B cell (primary cell): ENCODE measurements at regions of chr4 and their contacts with region 1.

Region 1: GRCh38 chr4:83110223-83110945 is 4.1 kb downstream of the PLAC8 start:
- DNase-seq: peak; percentile 94
- ATAC-seq: peak; percentile 75
- H3K4me3 ChIP-seq: peak overlapping the region; percentile 64 to 100 (median 75)
- H3K4me3 Mint-ChIP-seq: peak overlapping the region; percentile 97
- H3K27ac ChIP-seq: peak overlapping the region; percentile 91
- H3K27ac Mint-ChIP-seq: peak overlapping the region; percentile 99
- H3K4me1 ChIP-seq: peaks cover 44 to 48% of the 10 kb centered on the region in 2 donors
- H3K4me1 Mint-ChIP-seq: peaks cover 60% of the 10 kb centered on the region
- H3K27me3 ChIP-seq: no peaks in the 10 kb centered on the region
- H3K27me3 Mint-ChIP-seq: no peaks in the 10 kb centered on the region
- CTCF ChIP-seq: peak; percentile 75

Region 2: DNA sequence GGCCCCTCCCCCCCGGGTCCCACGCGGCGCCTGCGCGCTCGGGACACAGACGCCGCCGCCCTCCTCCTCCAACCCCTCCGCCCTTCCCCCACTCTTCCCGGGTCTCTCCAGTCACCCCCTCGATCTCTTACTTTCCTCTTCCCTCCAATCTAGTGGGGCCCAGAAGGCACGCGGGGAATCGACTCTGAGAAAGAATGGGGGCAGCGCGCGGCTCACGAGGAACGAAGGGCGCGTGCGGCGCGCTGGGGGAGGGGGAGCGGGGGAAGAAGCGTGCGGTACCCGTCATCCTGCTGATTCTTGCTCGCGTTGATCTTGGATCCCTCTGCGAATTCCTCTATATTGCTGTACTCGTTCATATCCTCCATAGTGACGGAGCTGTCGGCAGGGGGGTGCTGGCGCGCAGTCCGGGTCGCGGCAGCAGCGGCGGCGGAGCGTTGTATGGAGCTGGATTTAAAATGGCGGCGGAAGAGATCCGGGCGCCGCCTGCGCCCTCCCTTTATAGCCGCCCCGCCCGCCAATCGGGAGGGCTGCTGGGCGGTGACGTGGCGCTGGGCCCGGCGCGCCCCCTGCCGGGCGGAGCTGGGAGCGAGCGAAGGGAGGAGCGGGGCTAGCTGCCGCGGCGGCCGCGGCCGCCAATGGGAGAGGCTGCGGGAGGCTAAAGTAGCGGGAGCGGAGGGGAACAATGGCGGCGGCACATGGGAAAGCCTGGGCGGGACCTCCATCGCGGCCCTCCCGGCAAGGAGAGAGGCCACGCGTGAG is 681.2 kb before region 1 on chr4:
- CTCF ChIA-PET with region 1: no interaction called
- POLR2A ChIA-PET with region 1: no interaction called
- intact Hi-C with region 1: loop called (anchors 2 kb)
- DNase-seq: peak; percentile 97
- ATAC-seq: peak; percentile 64
- H3K4me3 ChIP-seq: peak overlapping the region; percentile 98 to 99 (median 98)
- H3K4me3 Mint-ChIP-seq: peak overlapping the region; percentile 100
- H3K27ac ChIP-seq: peak overlapping the region; percentile 96 to 100
- H3K27ac Mint-ChIP-seq: peak overlapping the region; percentile 100
- H3K4me1 ChIP-seq: peaks cover 27 to 32% of the 10 kb centered on the region in 2 donors
- H3K4me1 Mint-ChIP-seq: peaks cover 48% of the 10 kb centered on the region
- H3K27me3 ChIP-seq: no peaks in the 10 kb centered on the region
- H3K27me3 Mint-ChIP-seq: no peaks in the 10 kb centered on the region
- CTCF ChIP-seq: peak; percentile 97

Region 3: GRCh38 chr4:83034630-83035494 is 75.5 kb before region 1 on chr4 and contains the start of gene COPS4:
- CTCF ChIA-PET with region 1: interaction called, 4 read pairs
- POLR2A ChIA-PET with region 1: interaction called, 4 read pairs
- intact Hi-C with region 1: loop called (anchors 1 kb)
- DNase-seq: peak; percentile 99
- ATAC-seq: peak; percentile 95
- H3K4me3 ChIP-seq: peak within 1 kb of the TSS; percentile 80 to 94 (median 91)
- H3K4me3 Mint-ChIP-seq: peak within 1 kb of the TSS; percentile 98
- H3K27ac ChIP-seq: peak within 1 kb of the TSS; percentile 84 to 86
- H3K27ac Mint-ChIP-seq: peak within 1 kb of the TSS; percentile 98
- H3K4me1 ChIP-seq: peaks cover 10 to 16% of the 10 kb centered on the region in 2 donors
- H3K4me1 Mint-ChIP-seq: peaks cover 34% of the 10 kb centered on the region
- H3K27me3 ChIP-seq: no peaks in the 10 kb centered on the region
- H3K27me3 Mint-ChIP-seq: no peaks in the 10 kb centered on the region
- CTCF ChIP-seq: peak; percentile 34
- total RNA-seq, gene COPS4: 24.5 and 32.8 TPM in 2 replicates

Region 4: DNA sequence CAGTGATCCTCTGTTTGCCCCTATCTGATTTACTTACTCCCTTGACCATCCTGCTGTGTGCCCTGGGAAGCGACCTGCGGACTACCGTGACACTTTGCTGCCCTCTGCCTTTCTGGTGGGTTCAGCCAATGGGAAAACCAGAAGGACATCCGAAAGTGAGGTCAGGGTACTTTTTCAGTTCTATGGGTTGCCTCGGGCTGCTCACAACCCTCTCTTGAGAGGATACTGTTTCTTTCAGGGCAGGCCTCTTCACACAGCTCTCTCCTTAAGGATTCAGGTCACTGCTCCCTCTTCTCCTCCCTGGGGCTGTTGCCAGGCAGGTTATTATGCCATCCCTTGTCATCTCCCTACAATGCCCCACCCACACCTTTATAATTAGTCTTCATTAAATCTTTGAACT is 17.3 kb before region 1 on chr4:
- CTCF ChIA-PET with region 1: interaction called, 10 read pairs
- POLR2A ChIA-PET with region 1: interaction called, 16 read pairs
- intact Hi-C with region 1: no loop called
- DNase-seq: no peak
- ATAC-seq: no peak
- H3K4me3 ChIP-seq: no peak overlapping the region
- H3K4me3 Mint-ChIP-seq: no peak overlapping the region
- H3K27ac ChIP-seq: peak overlapping the region in 1 of 2 donors; percentile 58
- H3K27ac Mint-ChIP-seq: peak overlapping the region; percentile 80
- H3K4me1 ChIP-seq: peaks cover 0 to 5% of the 10 kb centered on the region in 2 donors
- H3K4me1 Mint-ChIP-seq: peaks cover 29% of the 10 kb centered on the region
- H3K27me3 ChIP-seq: no peaks in the 10 kb centered on the region
- H3K27me3 Mint-ChIP-seq: no peaks in the 10 kb centered on the region
- CTCF ChIP-seq: no peak

Region 5: GRCh38 chr4:83150653-83151330 is 40.4 kb after region 1 on chr4:
- CTCF ChIA-PET with region 1: interaction called, 20 read pairs
- POLR2A ChIA-PET with region 1: interaction called, 5 read pairs
- intact Hi-C with region 1: loop called (anchors 2 kb)
- DNase-seq: no peak
- ATAC-seq: no peak
- H3K4me3 ChIP-seq: no peak overlapping the region
- H3K4me3 Mint-ChIP-seq: no peak overlapping the region
- H3K27ac ChIP-seq: no peak overlapping the region
- H3K27ac Mint-ChIP-seq: no peak overlapping the region
- H3K4me1 ChIP-seq: peaks cover 31 to 33% of the 10 kb centered on the region in 2 donors
- H3K4me1 Mint-ChIP-seq: peaks cover 42% of the 10 kb centered on the region
- H3K27me3 ChIP-seq: no peaks in the 10 kb centered on the region
- H3K27me3 Mint-ChIP-seq: no peaks in the 10 kb centered on the region
- CTCF ChIP-seq: no peak

Region 6: GRCh38 chr4:83217721-83218522 is 107.5 kb after region 1 on chr4:
- CTCF ChIA-PET with region 1: interaction called, 45 read pairs
- POLR2A ChIA-PET with region 1: interaction called, 19 read pairs
- intact Hi-C with region 1: loop called (anchors 1 kb)
- DNase-seq: peak; percentile 95
- ATAC-seq: peak; percentile 90
- H3K4me3 ChIP-seq: peak overlapping the region in 3 of 5 experiments; percentile 6 to 37 (median 30)
- H3K4me3 Mint-ChIP-seq: peak overlapping the region; percentile 24
- H3K27ac ChIP-seq: peak overlapping the region; percentile 88 to 94
- H3K27ac Mint-ChIP-seq: peak overlapping the region; percentile 92
- H3K4me1 ChIP-seq: peaks cover 90 to 94% of the 10 kb centered on the region in 2 donors
- H3K4me1 Mint-ChIP-seq: peaks cover 87% of the 10 kb centered on the region
- H3K27me3 ChIP-seq: no peaks in the 10 kb centered on the region
- H3K27me3 Mint-ChIP-seq: no peaks in the 10 kb centered on the region
- CTCF ChIP-seq: no peak